ENCODE measurements at regions of chr9 and their contacts with region 1.

Region 1: GRCh38 chr9:3240656-3241268 is 285.0 kb downstream of the RFX3 start:
- DNase-seq: peak; percentile 35
- ATAC-seq: peak; percentile 97
- H3K4me3 ChIP-seq: no peak overlapping the region
- H3K27ac ChIP-seq: no peak overlapping the region
- H3K4me1 ChIP-seq: peaks cover 10% of the 10 kb centered on the region; the same call in 1 of the 2 replicates
- H3K27me3 ChIP-seq: no peaks in the 10 kb centered on the region
- CTCF ChIP-seq: peak; percentile 81 to 93 (median 86); a peak in 5 of 6 replicates
- EP300 ChIP-seq: no peak
- POLR2A ChIP-seq: no peak
- RAD21 ChIP-seq: peak; percentile 89

Region 2: GRCh38 chr9:3331817-3332216 is 91.1 kb after region 1 on chr9:
- CTCF ChIA-PET with region 1: interaction called, 19 read pairs
- POLR2A ChIA-PET with region 1: no interaction called
- RAD21 ChIA-PET with region 1: interaction called, 8 read pairs
- SMC1A ChIA-PET with region 1: interaction called, 6 read pairs
- in situ Hi-C with region 1: no loop called
- intact Hi-C with region 1: loop called (anchors 5 kb)
- DNase-seq: no peak
- ATAC-seq: no peak; the same call in 2 of the 3 replicates
- H3K4me3 ChIP-seq: no peak overlapping the region
- H3K27ac ChIP-seq: no peak overlapping the region
- H3K4me1 ChIP-seq: no peaks in the 10 kb centered on the region
- H3K27me3 ChIP-seq: no peaks in the 10 kb centered on the region
- CTCF ChIP-seq: peak; percentile 11 to 29 (median 14); a peak in 3 of 6 replicates
- EP300 ChIP-seq: no peak
- POLR2A ChIP-seq: no peak
- RAD21 ChIP-seq: peak; percentile 16; the same call in 1 of the 2 replicates

Measured in GM12878 (cell line).